GM18951 (cell line): ENCODE measurements at regions of chr14 and their contacts with region 1.

Region 1: GRCh38 chr14:65412032-65412846 is at the start of gene FUT8:
- POLR2A ChIP-seq: peak; percentile 88

Region 2: GRCh38 chr14:65824285-65824977 is 412.2 kb after region 1 on chr14:
- in situ Hi-C with region 1: loop called (anchors 10 kb)
- POLR2A ChIP-seq: no peak

Region 3: GRCh38 chr14:65958664-65959562 is 546.7 kb after region 1 on chr14:
- in situ Hi-C with region 1: loop called (anchors 25 kb)
- POLR2A ChIP-seq: no peak

Region 4: DNA sequence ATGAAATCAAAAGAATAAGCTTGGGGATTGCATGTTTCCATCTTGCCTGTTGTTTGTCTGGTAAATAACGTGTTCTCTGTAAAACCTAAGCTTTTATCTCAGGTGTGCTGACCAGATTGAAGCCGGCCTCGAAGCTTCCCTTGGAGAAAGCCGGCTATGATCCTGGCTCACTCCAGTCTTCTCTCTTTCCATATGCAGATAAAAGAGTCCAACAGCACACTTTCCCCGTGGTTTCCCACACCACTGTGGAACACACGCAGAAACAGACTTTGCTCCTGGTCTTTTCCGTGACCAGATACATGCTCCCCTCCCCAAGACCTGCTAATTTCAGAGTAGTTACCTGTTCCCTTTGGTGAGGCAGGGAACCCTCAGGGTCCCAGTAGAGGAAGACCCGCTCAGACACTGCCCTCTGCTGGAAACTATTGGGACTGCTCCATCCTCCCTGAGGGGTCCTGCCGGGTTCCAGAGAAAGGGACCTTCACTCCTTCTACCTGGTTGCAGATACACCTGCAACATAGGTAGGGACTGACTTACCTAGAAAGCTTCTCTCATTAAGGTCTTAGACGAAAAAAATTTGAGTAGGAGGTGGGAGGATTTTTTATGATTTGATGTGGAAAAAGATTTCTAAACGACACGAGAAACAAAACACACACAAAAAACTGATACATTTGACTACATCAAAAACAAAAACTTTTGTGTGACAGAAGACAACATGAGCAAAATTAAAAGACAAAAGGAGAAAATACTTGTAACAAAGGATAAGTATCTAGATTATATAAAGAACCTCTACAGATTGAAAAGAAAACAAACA is 658.5 kb after region 1 on chr14:
- in situ Hi-C with region 1: loop called (anchors 25 kb)
- POLR2A ChIP-seq: no peak